ENCODE measurements at regions of chr9 and their contacts with region 1.

Region 1: DNA sequence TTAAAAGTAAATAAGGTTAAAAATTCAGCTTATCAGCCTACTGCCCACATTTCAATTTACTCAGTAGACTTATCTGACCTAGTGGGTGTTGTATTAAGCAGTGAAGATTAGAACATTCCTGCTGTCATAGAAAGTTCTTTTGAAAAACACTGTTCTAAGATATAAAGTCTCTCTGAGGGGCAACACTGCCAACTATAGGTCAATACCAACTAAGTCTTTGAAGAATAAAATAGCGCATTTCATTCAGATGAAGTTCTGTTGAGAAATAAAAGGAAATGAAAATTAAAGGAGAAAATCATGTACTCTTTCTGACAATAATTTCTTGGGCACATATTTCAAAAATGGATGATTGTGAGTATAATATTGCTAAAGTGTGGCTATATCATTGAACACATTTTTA is 86.8 kb downstream of the PTPRD start:
- DNase-seq: no peak
- H3K4me3 ChIP-seq: no peak overlapping the region
- H3K4me3 Mint-ChIP-seq: no peak overlapping the region
- H3K27ac ChIP-seq: no peak overlapping the region
- H3K27ac Mint-ChIP-seq: no peak overlapping the region
- H3K4me1 ChIP-seq: no peaks in the 10 kb centered on the region
- H3K4me1 Mint-ChIP-seq: no peaks in the 10 kb centered on the region
- H3K27me3 ChIP-seq: no peaks in the 10 kb centered on the region
- H3K27me3 Mint-ChIP-seq: peaks cover 0 to under 1% (median 0%) of the 10 kb centered on the region in 3 donors
- CTCF ChIP-seq: no peak

Region 2: DNA sequence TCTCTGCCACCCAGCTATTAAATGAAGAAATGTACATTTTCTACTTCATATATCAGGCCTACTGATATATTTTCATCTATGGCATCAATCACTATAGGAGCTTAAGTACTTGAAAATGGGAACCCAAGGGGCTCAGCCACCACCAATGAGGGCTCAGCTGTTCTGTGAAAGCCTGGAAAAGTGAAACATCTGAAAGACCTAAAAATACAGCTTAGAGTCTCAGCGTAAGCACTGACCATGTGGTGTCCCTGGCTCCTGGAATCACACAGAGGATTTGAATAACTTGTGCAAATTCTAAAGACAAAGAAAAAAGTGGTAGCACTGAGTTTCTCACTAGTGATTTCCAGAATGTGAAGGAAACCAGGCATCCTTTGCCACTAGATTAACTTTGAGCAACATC is 22.4 kb after region 1 on chr9:
- intact Hi-C with region 1: loop called in 1 of 2 experiments (anchors 2 kb)
- DNase-seq: no peak
- H3K4me3 ChIP-seq: no peak overlapping the region
- H3K4me3 Mint-ChIP-seq: no peak overlapping the region
- H3K27ac ChIP-seq: no peak overlapping the region
- H3K27ac Mint-ChIP-seq: no peak overlapping the region
- H3K4me1 ChIP-seq: no peaks in the 10 kb centered on the region
- H3K4me1 Mint-ChIP-seq: no peaks in the 10 kb centered on the region
- H3K27me3 ChIP-seq: no peaks in the 10 kb centered on the region
- H3K27me3 Mint-ChIP-seq: peaks cover 0 to 1% (median 0%) of the 10 kb centered on the region in 3 donors
- CTCF ChIP-seq: no peak

Region 3: DNA sequence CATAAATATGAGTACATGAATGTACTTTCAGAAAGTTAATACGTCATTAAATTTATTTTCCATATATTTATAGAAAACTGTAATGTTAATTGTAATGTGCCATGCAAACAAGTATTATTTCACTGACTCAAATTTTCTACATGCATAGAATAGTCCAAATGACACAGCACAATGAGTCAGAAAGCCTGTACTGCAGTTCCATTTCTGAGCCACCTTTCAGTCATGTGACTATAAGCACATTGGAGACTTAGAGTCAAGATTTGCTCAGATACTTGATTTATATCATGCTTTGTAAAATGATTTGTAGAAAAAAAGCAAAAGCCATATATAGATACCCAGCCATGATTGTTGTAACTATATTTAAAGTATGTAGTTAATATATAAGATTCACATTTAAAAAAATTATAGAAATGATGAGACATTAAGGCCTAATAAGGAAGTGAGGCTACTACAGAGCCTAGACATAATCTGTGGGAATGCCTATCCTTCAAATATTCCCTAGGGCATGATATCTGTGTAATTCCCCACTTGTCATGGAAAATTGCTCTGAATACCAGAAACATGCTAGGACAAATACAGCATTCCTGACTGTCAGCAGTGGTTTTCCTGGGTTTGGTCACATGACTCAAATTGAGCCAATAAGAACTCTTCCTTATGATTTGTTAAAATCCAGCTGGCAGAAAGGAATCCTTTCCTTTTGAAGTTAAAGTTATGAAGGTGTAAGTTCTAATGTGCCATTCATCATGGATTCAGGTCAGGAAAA is 36.8 kb after region 1 on chr9:
- intact Hi-C with region 1: no loop called
- DNase-seq: no peak
- H3K4me3 ChIP-seq: no peak overlapping the region
- H3K4me3 Mint-ChIP-seq: no peak overlapping the region
- H3K27ac ChIP-seq: no peak overlapping the region
- H3K27ac Mint-ChIP-seq: no peak overlapping the region
- H3K4me1 ChIP-seq: no peaks in the 10 kb centered on the region
- H3K4me1 Mint-ChIP-seq: no peaks in the 10 kb centered on the region
- H3K27me3 ChIP-seq: no peaks in the 10 kb centered on the region
- H3K27me3 Mint-ChIP-seq: no peaks in the 10 kb centered on the region
- CTCF ChIP-seq: no peak

Measured in CD14-positive monocyte (primary cell).